Activated CD4-positive, alpha-beta T cell treated with anti-CD3 and anti-CD28 coated beads for 36 hours (primary cell): ENCODE measurements at regions of chr5 and their contacts with region 1.

Region 1: GRCh38 chr5:179623003-179623880 is at the start of gene HNRNPH1:
- DNase-seq: peak; percentile 99
- ATAC-seq: peak; percentile 79
- H3K4me3 Mint-ChIP-seq: peak within 1 kb of the TSS; percentile 94
- H3K27ac Mint-ChIP-seq: peak within 1 kb of the TSS; percentile 100
- H3K4me1 Mint-ChIP-seq: peaks cover 37% of the 10 kb centered on the region
- H3K27me3 Mint-ChIP-seq: no peaks in the 10 kb centered on the region
- total RNA-seq, gene HNRNPH1: 634 to 659 TPM

Region 2: DNA sequence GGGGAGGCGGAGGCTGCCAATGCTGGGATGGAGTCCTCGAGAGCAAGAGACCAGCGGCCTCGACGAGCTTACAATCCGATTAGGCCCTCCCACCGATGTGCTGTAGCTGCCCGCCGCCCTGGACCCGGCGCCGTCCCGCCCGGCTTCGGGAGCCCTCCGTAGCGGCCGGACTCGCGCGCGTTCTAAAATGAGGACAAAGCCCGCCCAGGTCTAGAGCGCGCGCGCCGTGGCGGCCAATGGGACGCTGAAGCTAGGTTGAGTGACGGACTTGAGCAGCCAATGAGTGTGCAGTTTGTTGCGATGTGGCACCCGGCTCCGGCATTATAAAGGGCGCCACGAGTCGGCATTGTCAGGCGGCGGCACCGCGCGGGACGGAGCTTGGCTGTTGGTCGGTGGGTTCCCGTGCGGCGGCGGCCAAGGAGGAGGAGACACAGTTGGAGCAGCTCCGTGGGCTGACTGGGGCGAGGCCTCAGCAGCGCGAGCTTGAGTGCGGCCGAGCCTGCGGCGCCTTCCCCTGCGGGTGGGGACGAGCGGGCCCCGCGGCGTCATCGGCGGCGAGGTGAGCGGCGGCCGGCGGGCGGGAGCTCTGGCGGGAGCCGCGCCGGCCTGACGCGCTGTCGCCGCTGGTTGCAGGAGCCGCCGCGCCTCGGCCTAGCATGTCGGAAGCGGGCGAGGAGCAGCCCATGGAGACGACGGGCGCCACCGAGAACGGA is 1418.9 kb before region 1 on chr5 and contains the start of gene HNRNPAB:
- CTCF ChIA-PET with region 1: no interaction called
- POLR2A ChIA-PET with region 1: no interaction called
- intact Hi-C with region 1: loop called in 1 of 2 experiments (anchors 5 kb)
- DNase-seq: peak; percentile 97
- ATAC-seq: peak; percentile 84
- H3K4me3 Mint-ChIP-seq: peak within 1 kb of the TSS; percentile 82
- H3K27ac Mint-ChIP-seq: peak within 1 kb of the TSS; percentile 97
- H3K4me1 Mint-ChIP-seq: peaks cover 30% of the 10 kb centered on the region
- H3K27me3 Mint-ChIP-seq: no peaks in the 10 kb centered on the region
- total RNA-seq, gene HNRNPAB: 258 to 336 TPM

Region 3: GRCh38 chr5:178619390-178619789 is 1003.9 kb before region 1 on chr5:
- CTCF ChIA-PET with region 1: no interaction called
- POLR2A ChIA-PET with region 1: no interaction called
- intact Hi-C with region 1: no loop called
- DNase-seq: no peak
- ATAC-seq: no peak
- H3K4me3 Mint-ChIP-seq: no peak overlapping the region
- H3K27ac Mint-ChIP-seq: no peak overlapping the region
- H3K4me1 Mint-ChIP-seq: peaks cover 50% of the 10 kb centered on the region
- H3K27me3 Mint-ChIP-seq: no peaks in the 10 kb centered on the region

Region 4: DNA sequence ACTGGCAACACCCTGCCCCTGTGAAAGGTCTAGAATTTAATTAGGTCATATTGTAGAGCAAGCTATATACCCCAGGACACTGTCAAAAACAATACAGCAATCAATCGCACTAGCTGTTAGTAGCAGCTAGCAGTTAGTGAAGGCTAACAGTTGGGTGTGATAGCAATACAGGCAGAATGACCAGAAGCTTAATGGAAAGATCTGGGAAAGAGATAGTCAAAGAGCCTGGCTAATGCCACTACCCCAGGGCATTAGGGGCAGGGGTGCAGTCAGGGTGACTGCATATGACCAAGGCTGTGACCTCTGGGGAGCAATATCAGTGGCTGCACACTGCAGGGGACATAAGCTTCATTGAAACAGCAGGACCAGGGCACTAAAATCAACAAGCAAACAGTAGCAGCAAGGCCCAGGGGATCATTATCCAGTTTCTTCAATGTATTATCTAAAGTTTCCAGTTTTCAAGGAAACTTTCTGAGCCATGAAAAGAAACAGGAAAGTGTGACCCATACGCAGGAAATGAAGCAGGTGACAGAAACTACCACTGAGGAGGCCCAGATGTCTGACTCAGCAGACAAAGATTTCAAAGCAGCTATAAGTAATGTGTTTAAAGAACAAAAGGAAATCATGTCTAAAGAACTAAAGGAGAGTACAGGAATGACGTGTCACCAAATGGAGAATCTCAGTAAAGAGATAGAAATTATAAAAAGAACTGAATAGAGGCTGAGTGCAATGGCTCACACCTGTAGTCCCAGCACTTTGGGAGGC is 480.6 kb before region 1 on chr5:
- CTCF ChIA-PET with region 1: interaction called, 3 read pairs
- POLR2A ChIA-PET with region 1: interaction called, 4 read pairs
- intact Hi-C with region 1: loop called in 1 of 2 experiments (anchors 1 kb)
- DNase-seq: peak; percentile 67
- ATAC-seq: peak; percentile 87
- H3K4me3 Mint-ChIP-seq: no peak overlapping the region
- H3K27ac Mint-ChIP-seq: peak overlapping the region; percentile 88
- H3K4me1 Mint-ChIP-seq: peaks cover 37% of the 10 kb centered on the region
- H3K27me3 Mint-ChIP-seq: no peaks in the 10 kb centered on the region

Region 5: DNA sequence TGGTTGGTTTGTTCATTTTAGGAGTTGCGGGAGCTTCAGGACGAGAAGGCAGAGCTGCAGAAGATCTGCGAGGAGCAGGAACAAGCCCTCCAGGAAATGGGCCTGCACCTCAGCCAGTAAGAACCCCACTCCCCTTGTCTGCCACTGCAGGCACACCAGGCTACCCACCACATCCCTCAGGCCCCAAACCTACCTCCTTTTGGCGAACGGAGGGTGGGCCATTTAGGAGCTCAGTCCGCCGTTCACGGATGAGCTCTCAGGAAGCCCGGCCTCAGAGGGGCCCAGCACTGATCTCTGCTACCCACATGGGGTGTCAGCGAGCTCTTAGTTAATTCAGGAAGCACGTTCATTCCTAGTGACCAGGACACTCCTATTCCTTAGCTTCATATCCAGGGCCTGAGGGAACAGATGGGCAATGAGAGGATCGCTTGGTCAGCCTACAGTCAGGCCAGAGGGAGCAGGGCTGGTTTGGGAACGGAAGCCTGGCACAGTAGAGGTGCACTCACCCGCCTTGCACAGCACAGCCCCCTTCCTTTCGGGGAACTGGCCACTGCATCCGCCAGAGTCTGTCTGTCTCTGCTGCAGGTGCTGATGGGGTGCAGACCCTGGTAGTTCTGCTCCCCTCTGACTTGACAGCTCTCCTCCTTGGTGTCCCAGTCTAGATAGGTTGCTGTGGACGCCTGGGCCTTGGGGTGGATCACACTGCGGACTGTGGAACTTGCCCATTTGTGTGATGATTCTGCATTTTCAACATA is 21.2 kb before region 1 on chr5:
- CTCF ChIA-PET with region 1: no interaction called
- POLR2A ChIA-PET with region 1: no interaction called
- intact Hi-C with region 1: no loop called
- DNase-seq: no peak
- ATAC-seq: no peak
- H3K4me3 Mint-ChIP-seq: no peak overlapping the region
- H3K27ac Mint-ChIP-seq: no peak overlapping the region
- H3K4me1 Mint-ChIP-seq: no peaks in the 10 kb centered on the region
- H3K27me3 Mint-ChIP-seq: no peaks in the 10 kb centered on the region

Region 6: GRCh38 chr5:179678223-179679013 is 55.2 kb after region 1 on chr5:
- CTCF ChIA-PET with region 1: no interaction called
- POLR2A ChIA-PET with region 1: interaction called, 10 read pairs
- intact Hi-C with region 1: loop called (anchors 1 kb)
- DNase-seq: peak; percentile 97
- ATAC-seq: peak; percentile 90
- H3K4me3 Mint-ChIP-seq: peak overlapping the region; percentile 91
- H3K27ac Mint-ChIP-seq: peak overlapping the region; percentile 97
- H3K4me1 Mint-ChIP-seq: peaks cover 23% of the 10 kb centered on the region
- H3K27me3 Mint-ChIP-seq: no peaks in the 10 kb centered on the region

Region 7: DNA sequence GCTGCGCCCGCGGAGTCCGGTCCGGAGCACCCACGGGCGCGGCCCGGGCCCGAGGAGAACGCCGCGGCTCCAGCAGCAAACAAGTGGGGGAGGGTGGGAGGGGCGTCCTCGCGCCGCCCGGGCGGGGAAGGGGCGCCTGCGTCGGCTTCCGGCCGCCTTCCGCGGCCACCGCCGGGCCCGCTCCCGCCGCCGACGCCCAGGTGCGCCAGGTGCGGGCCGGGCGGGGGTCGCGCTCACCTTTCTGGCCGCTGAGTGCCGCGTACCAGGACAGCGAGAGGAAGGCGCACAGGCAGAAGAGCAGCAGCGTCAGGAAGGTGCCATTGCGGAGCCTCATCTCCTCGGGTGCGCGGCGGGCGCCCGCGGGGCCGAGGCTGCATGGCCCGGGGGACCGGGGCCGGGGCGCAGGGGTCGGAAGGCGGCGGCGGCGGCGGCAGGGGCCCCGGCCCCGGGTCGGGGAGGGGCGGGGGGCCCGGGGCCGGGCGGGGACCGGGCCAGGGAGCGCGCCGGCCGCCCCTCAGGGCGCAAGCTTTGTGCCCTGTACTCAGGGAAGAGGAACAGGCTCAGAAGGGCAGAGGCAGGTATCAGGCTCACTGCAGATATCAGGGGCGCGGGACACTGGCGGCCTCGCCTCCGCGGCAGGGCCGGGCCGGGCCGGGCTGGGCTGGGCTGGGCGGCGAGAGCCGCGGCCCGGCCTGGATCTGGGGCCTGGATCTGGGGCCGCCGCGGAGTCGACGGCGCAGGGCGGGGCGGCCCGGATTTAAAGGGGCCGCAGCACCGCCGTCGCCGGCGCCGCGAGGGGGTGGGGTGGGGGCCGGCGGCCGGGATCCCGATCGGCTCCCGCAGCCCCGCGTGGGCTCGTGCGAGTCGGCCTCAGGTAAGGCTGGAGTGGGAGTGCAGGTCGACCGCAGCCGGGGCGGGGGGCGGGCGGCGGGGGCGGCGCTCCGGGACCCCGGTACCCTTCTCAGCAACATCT is 183.3 kb after region 1 on chr5 and contains the start of gene MGAT4B:
- CTCF ChIA-PET with region 1: no interaction called
- POLR2A ChIA-PET with region 1: interaction called, 11 read pairs
- intact Hi-C with region 1: loop called in 1 of 2 experiments (anchors 5 kb)
- DNase-seq: peak; percentile 82
- ATAC-seq: peak; percentile 65
- H3K4me3 Mint-ChIP-seq: peak within 1 kb of the TSS; percentile 82
- H3K27ac Mint-ChIP-seq: peak within 1 kb of the TSS; percentile 25
- H3K4me1 Mint-ChIP-seq: peaks cover 36% of the 10 kb centered on the region
- H3K27me3 Mint-ChIP-seq: no peaks in the 10 kb centered on the region
- total RNA-seq, gene MGAT4B: 52.4 to 62.8 TPM

Region 8: DNA sequence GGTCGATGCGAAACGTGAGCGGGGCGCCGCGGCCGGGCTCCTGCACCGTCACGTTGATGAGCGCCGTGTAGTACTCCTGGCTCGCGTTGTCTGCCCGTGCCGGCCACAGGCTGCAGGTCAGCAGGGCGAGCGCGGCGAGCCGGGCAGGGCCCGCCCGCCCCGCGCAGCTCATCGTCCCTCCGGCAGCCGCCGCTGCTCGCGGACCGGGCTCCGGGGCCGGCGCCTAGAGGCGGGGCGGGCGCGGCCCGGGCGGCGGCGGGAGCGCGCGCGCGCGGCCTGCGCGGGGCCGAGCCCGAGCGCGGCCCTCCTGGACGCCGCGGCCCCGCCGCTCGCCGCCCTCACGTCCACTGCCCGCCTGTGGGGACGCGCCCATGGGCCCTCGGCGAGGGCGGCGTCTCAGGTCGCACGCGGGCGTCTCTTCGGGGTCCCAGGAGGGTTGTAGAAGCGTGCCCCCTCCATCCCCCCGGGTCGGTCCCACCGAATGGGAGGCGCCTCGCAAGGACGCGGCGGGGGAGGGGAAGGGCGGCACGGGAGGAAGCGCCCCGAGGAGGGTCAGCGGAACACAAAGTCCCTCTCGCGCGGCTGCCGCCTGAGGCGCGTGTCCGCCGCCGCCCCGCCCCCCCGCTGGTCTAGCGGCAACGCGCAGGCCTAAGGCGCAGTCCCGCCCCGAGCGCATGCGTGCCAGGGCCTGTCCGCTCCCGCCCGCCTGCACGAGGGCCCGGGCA is 448.5 kb after region 1 on chr5 and contains the start of gene RNF130:
- CTCF ChIA-PET with region 1: no interaction called
- POLR2A ChIA-PET with region 1: no interaction called
- intact Hi-C with region 1: loop called in 1 of 2 experiments (anchors 5 kb)
- DNase-seq: peak; percentile 93
- ATAC-seq: peak; percentile 79
- H3K4me3 Mint-ChIP-seq: peak within 1 kb of the TSS; percentile 80
- H3K27ac Mint-ChIP-seq: peak within 1 kb of the TSS; percentile 44
- H3K4me1 Mint-ChIP-seq: peaks cover 29% of the 10 kb centered on the region
- H3K27me3 Mint-ChIP-seq: no peaks in the 10 kb centered on the region
- total RNA-seq, gene RNF130: 10.3 to 13.3 TPM